BJ (cell line): ENCODE measurements at regions of chr12 and their contacts with region 1.

Region 1: GRCh38 chr12:6873094-6874014 is at the start of gene SPSB2:
- DNase-seq: no peak
- H3K4me3 ChIP-seq: peak within 1 kb of the TSS; percentile 65
- H3K27me3 ChIP-seq: no peaks in the 10 kb centered on the region
- CTCF ChIP-seq: no peak
- polyA plus RNA-seq, gene SPSB2: 5.0 and 7.3 TPM in 2 replicates

Region 2: GRCh38 chr12:6851921-6852650 is 21.3 kb before region 1 on chr12 and contains the start of gene USP5:
- CTCF ChIA-PET with region 1: interaction called, 112 read pairs
- POLR2A ChIA-PET with region 1: interaction called, 34 read pairs
- DNase-seq: peak; percentile 99
- H3K4me3 ChIP-seq: peak within 1 kb of the TSS; percentile 78
- H3K27me3 ChIP-seq: no peaks in the 10 kb centered on the region
- CTCF ChIP-seq: 0 out of 2 replicates have a peak, but pooled peaks have one; percentile 3
- polyA plus RNA-seq, gene USP5: 52.9 and 90.0 TPM in 2 replicates

Region 3: DNA sequence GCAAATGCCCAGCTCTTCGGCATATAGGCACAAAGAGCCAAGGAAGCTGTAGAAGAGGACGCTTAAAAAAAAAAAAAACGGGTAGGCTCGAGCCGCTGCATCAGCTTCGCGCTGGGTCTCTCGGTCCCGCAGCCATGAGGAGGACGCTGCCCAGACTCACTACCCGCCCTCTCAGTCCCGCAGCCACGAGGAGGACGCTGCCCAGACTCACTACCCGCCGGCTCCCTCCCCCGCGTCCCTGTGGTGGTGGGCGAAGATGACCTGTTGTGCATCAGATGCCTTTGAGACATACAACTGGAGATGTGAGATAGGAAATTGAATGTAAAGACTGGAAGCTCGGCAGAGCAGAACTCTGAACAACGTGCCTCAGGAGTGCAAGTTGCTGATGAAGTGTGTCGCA is 11.2 kb after region 1 on chr12:
- CTCF ChIA-PET with region 1: interaction called, 41 read pairs
- POLR2A ChIA-PET with region 1: no interaction called
- DNase-seq: no peak
- H3K4me3 ChIP-seq: no peak overlapping the region
- H3K27me3 ChIP-seq: no peaks in the 10 kb centered on the region
- CTCF ChIP-seq: no peak

Region 4: GRCh38 chr12:6914246-6914946 is 41.0 kb after region 1 on chr12 and contains the start of gene ENO2:
- CTCF ChIA-PET with region 1: interaction called, 20 read pairs
- POLR2A ChIA-PET with region 1: no interaction called
- DNase-seq: no peak
- H3K4me3 ChIP-seq: peak within 1 kb of the TSS; percentile 91
- H3K27me3 ChIP-seq: no peaks in the 10 kb centered on the region
- CTCF ChIP-seq: no peak
- polyA plus RNA-seq, gene ENO2: 27.9 and 29.7 TPM in 2 replicates

Region 5: GRCh38 chr12:6937481-6938297 is 64.3 kb after region 1 on chr12:
- CTCF ChIA-PET with region 1: interaction called, 21 read pairs
- POLR2A ChIA-PET with region 1: interaction called, 5 read pairs
- DNase-seq: peak; percentile 48
- H3K4me3 ChIP-seq: peak overlapping the region; percentile 60
- H3K27me3 ChIP-seq: no peaks in the 10 kb centered on the region
- CTCF ChIP-seq: peak; percentile 97